ENCODE measurements at regions of chr4 and their contacts with region 1.

Region 1: DNA sequence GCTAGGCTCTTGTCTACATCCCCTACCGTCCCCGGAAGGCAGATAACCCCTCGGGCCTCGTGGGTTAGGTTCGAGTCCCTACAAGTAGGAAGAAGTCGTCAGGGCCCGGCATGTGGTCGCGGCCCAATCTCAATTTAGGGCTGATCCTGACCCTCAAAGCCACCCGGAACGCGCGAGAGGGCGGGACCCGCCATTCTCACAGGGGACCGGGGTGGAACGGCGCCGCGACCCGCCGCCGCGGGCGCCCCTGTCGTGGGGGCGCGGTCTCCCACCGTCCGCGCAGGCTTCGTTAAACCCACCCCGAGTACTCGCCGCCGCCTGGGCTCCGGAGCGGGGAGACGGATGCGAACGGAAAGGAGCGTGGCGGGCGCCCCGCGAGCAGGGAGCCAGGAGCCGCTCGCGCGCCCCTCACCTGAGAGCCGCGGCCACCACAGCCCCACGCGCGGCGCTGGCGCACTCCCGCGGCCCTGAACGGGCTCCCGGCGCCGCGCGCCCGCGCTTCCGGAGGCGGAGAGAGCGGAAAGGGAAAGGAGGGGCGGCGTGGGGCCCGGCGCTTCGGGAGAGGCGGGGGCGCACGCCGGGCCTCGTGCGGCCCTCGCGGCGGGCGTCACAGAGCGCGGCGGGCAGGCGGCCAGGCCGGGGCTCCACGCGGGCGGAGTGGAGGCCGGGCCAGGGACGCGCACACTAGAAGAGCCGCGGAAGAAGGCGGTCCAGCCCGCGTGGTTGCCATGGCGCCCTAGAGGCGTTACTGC is at the start of gene CFAP97:
- DNase-seq: peak; percentile 88 to 90 (median 90)
- H3K4me3 ChIP-seq: peak within 1 kb of the TSS; percentile 47 to 83
- H3K4me3 Mint-ChIP-seq: peak within 1 kb of the TSS; percentile 91 to 99 (median 96)
- H3K27ac ChIP-seq: peak within 1 kb of the TSS; percentile 82
- H3K27ac Mint-ChIP-seq: peak within 1 kb of the TSS; percentile 98 to 99 (median 99)
- H3K4me1 ChIP-seq: peaks cover 48% of the 10 kb centered on the region
- H3K4me1 Mint-ChIP-seq: peaks cover 31 to 66% (median 48%) of the 10 kb centered on the region in 4 donors
- H3K27me3 ChIP-seq: no peaks in the 10 kb centered on the region
- H3K27me3 Mint-ChIP-seq: no peaks in the 10 kb centered on the region
- total RNA-seq, gene CFAP97: 41.6 to 41.9 TPM

Region 2: GRCh38 chr4:185256446-185256845 is 52.8 kb after region 1 on chr4:
- CTCF ChIA-PET with region 1: interaction called, 3 read pairs
- POLR2A ChIA-PET with region 1: interaction called, 35 read pairs
- intact Hi-C with region 1: loop called (anchors 1 kb)
- DNase-seq: no peak
- H3K4me3 ChIP-seq: peak overlapping the region in 1 of 2 donors; percentile 23
- H3K4me3 Mint-ChIP-seq: peak overlapping the region in 6 of 8 donors; percentile 52 to 88 (median 76)
- H3K27ac ChIP-seq: peak overlapping the region; percentile 49
- H3K27ac Mint-ChIP-seq: peak overlapping the region in 5 of 7 donors; percentile 83 to 99 (median 91)
- H3K4me1 ChIP-seq: peaks cover 73% of the 10 kb centered on the region
- H3K4me1 Mint-ChIP-seq: peaks cover 33 to 71% (median 57%) of the 10 kb centered on the region in 4 donors
- H3K27me3 ChIP-seq: no peaks in the 10 kb centered on the region
- H3K27me3 Mint-ChIP-seq: no peaks in the 10 kb centered on the region

Region 3: GRCh38 chr4:185425647-185426352 is 222.1 kb after region 1 on chr4 and contains the start of gene UFSP2:
- CTCF ChIA-PET with region 1: interaction called, 3 read pairs
- POLR2A ChIA-PET with region 1: interaction called, 10 read pairs
- intact Hi-C with region 1: loop called (anchors 1 kb)
- DNase-seq: peak; percentile 91 to 96 (median 92)
- H3K4me3 ChIP-seq: peak within 1 kb of the TSS; percentile 45 to 77
- H3K4me3 Mint-ChIP-seq: peak within 1 kb of the TSS; percentile 89 to 98 (median 96)
- H3K27ac ChIP-seq: peak within 1 kb of the TSS; percentile 99
- H3K27ac Mint-ChIP-seq: peak within 1 kb of the TSS; percentile 92 to 100 (median 100)
- H3K4me1 ChIP-seq: peaks cover 24% of the 10 kb centered on the region
- H3K4me1 Mint-ChIP-seq: peaks cover 23 to 46% (median 29%) of the 10 kb centered on the region in 4 donors
- H3K27me3 ChIP-seq: no peaks in the 10 kb centered on the region
- H3K27me3 Mint-ChIP-seq: peaks cover 1 to 2% of the 10 kb centered on the region in 2 donors
- total RNA-seq, gene UFSP2: 30.1 to 30.3 TPM